GM10248 (cell line): ENCODE measurements at regions of chr14 and their contacts with region 1.

Region 1: DNA sequence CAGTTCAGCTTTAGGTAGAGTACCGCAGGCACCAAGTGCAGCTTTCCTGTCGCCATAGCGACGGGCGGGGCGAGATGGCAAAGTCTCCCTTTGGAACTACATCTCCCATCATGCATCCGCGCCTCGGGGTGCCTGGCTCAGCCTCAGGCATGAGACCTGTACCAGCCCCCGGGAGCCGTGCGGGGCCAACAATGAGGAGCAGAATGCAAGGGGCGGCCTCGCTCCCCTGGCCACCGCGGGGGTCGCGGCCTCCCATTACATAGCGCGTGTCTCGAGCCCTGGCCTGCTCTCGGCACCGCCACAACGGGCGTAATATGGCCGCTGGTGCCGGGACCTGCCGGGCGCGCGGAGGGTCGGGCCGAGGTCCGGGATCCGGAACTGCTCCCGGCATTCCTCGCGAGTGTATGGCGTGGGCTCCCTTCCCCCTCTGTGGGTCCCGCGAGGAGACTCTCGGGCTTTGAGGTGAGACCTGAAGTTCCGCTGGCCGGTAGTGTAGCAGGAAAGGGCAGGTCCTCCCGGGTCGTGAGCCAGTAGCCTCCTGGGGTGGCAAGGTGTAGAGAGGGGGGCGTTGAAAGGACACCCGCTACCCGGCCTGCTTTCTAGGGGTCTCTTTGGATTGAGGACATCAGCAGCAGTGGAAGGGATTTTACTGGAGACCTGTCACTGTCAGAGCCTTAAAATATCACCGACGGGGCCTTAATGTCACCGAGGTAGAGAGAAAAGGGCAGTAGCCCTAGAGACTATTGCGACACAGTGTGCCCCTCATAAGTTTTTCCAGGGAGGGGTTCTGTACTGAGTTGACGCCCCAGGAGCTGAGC is at the start of gene THTPA:
- DNase-seq: peak; percentile 94
- CTCF ChIP-seq: no peak

Region 2: DNA sequence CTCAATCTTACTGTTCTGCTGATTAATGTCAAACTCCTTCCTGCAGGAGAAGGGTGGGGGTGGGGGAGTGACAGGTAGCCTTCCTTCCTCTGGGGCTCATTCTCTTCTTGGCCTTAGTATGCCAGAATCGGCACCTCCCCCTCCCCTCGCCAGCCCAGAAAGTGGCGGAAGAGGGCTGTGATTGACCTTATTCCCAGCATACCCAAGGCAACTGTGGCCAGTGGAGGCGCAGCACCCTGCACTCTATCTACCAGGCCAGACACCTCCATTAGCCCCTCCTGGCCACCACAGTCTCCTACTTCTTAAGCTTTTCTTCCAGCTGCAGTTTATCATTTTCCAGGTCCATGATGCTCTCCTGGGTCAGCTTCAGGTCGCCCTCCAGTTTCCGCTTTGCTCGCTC is 163.5 kb before region 1 on chr14:
- CTCF ChIA-PET with region 1: no interaction called
- POLR2A ChIA-PET with region 1: no interaction called
- DNase-seq: no peak
- CTCF ChIP-seq: no peak

Region 3: GRCh38 chr14:23478111-23478759 is 77.9 kb before region 1 on chr14:
- CTCF ChIA-PET with region 1: interaction called, 497 read pairs
- POLR2A ChIA-PET with region 1: interaction called, 3 read pairs
- DNase-seq: peak; percentile 50
- CTCF ChIP-seq: peak; percentile 60

Region 4: GRCh38 chr14:23494223-23494622 is 61.9 kb before region 1 on chr14:
- CTCF ChIA-PET with region 1: interaction called, 11 read pairs
- POLR2A ChIA-PET with region 1: no interaction called
- DNase-seq: no peak
- CTCF ChIP-seq: no peak

Region 5: GRCh38 chr14:23539248-23540140 is 16.6 kb before region 1 on chr14:
- CTCF ChIA-PET with region 1: interaction called, 75 read pairs
- POLR2A ChIA-PET with region 1: interaction called, 6 read pairs
- DNase-seq: peak; percentile 81
- CTCF ChIP-seq: peak; percentile 89

Region 6: DNA sequence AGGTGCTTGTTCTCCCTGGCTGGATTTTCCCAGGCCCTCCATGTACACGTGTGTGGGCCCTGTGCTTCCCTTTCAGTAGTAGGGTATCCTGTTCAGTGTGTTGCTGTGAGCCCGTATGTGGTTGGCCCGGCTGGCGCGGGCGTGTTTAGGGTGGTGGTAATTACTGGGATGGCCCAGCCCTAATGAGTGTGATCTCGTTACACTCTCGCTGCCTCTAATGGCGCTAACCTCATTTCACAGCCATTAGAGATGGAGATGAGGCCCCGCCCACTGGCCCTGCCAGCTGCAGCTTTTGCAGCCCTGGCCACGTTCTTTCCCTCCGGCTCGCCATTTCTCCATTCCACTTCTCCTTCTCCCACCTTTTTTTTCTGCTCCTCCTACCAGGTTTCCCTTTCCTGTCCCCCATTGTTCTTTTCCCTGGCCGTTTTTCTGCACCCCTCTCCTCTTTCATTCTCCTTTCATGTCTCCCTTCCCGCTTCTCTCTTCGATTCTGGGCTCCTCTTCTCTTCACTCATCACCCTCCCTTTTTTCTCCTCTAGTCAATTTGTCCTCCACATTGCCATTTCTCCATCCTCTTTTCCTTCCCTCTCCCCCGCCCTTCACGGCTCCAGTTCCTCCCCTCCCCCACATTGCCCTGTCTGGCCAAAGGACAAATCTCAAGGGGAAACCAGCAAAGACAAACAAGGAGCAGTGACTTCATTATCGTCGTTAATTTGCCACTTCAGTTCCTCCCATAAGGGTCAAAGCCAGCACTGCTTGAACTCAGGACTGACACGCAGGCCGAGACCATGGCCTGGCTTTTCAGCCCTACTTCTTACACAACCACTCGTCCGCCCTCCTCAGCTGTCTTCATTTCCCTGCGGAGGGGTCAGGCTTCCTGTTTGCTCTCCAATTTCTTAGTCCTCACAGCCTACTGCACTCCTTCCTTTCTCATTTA is 11.3 kb before region 1 on chr14:
- CTCF ChIA-PET with region 1: interaction called, 75 read pairs
- POLR2A ChIA-PET with region 1: interaction called, 6 read pairs
- DNase-seq: no peak
- CTCF ChIP-seq: no peak

Region 7: DNA sequence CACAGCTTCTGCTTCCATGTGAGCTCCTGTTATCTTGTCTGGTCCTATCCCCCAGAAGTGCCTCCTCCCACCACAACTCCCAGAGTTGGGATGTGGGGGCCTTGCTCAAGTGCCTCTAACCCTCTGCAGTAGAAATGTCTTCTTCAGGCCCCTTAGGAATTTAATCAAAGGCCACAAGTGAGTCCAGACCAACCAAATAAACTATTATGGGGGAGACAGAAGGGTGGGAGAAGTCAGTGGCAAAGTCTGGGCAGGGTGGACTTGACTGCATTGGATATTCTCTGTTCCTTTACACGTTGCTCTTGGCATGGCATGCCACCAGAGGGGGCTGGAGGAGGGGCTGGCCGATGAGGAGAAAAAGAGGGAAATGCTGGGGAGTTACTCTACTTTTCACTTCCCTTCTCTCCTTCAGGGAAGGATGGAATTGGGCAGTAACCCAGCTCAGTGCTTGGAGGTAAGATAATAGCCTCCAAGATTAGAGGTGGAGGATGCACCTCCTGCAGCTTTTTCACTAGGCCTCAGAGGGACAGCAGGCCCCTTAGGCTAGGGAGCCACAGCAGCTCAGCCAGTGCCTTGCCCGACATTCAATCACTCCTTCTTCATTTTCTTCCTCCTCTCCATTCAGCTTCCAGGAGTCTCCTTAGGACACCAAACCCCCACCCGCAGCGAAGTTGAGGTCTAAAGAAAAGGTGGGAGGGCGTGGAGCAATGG is 12.7 kb after region 1 on chr14:
- CTCF ChIA-PET with region 1: interaction called, 47 read pairs
- POLR2A ChIA-PET with region 1: interaction called, 3 read pairs
- DNase-seq: no peak
- CTCF ChIP-seq: peak; percentile 51